IMR-90 (cell line): ENCODE measurements at regions of chrX and their contacts with region 1.

Region 1: GRCh38 chrX:155819966-155820491 is 61.1 kb upstream of the VAMP7 start:
- DNase-seq: peak; percentile 85
- ATAC-seq: peak; percentile 95
- H3K4me3 ChIP-seq: no peak overlapping the region
- H3K27ac ChIP-seq: no peak overlapping the region
- H3K4me1 ChIP-seq: no peaks in the 10 kb centered on the region
- H3K27me3 ChIP-seq: no peaks in the 10 kb centered on the region
- CTCF ChIP-seq: peak; percentile 72
- POLR2A ChIP-seq: no peak
- RAD21 ChIP-seq: peak; percentile 91

Region 2: GRCh38 chrX:154918060-154918483 is 902.0 kb before region 1 on chrX:
- CTCF ChIA-PET with region 1: no interaction called
- POLR2A ChIA-PET with region 1: no interaction called
- dilution Hi-C with region 1: no loop called
- in situ Hi-C with region 1: no loop called
- intact Hi-C with region 1: loop called (anchors 1 kb)
- DNase-seq: peak; percentile 80
- ATAC-seq: peak; percentile 89
- H3K4me3 ChIP-seq: 0 out of 2 replicates have a peak overlapping the region, but pooled peaks have one; percentile 6
- H3K27ac ChIP-seq: no peak overlapping the region
- H3K4me1 ChIP-seq: no peaks in the 10 kb centered on the region
- H3K27me3 ChIP-seq: no peaks in the 10 kb centered on the region
- CTCF ChIP-seq: peak; percentile 66
- POLR2A ChIP-seq: no peak
- RAD21 ChIP-seq: peak; percentile 73

Region 3: GRCh38 chrX:155094468-155095061 is 725.5 kb before region 1 on chrX:
- CTCF ChIA-PET with region 1: no interaction called
- POLR2A ChIA-PET with region 1: no interaction called
- dilution Hi-C with region 1: no loop called
- in situ Hi-C with region 1: loop called (anchors 10 kb)
- intact Hi-C with region 1: no loop called
- DNase-seq: peak; percentile 21
- ATAC-seq: peak; percentile 61; the same call in 1 of the 2 replicates
- H3K4me3 ChIP-seq: no peak overlapping the region
- H3K27ac ChIP-seq: no peak overlapping the region
- H3K4me1 ChIP-seq: no peaks in the 10 kb centered on the region
- H3K27me3 ChIP-seq: no peaks in the 10 kb centered on the region
- CTCF ChIP-seq: peak; percentile 54
- POLR2A ChIP-seq: no peak
- RAD21 ChIP-seq: peak; percentile 43

Region 4: GRCh38 chrX:155216179-155216939 is 603.7 kb before region 1 on chrX and contains the start of gene VBP1:
- CTCF ChIA-PET with region 1: no interaction called
- POLR2A ChIA-PET with region 1: no interaction called
- dilution Hi-C with region 1: no loop called
- in situ Hi-C with region 1: no loop called
- intact Hi-C with region 1: loop called (anchors 2 kb)
- DNase-seq: peak; percentile 96
- ATAC-seq: peak; percentile 97
- H3K4me3 ChIP-seq: peak within 1 kb of the TSS; percentile 92
- H3K27ac ChIP-seq: peak within 1 kb of the TSS; percentile 90
- H3K4me1 ChIP-seq: no peaks in the 10 kb centered on the region
- H3K27me3 ChIP-seq: no peaks in the 10 kb centered on the region
- CTCF ChIP-seq: peak; percentile 41
- POLR2A ChIP-seq: peak; percentile 64; the same call in 1 of the 2 replicates
- RAD21 ChIP-seq: no peak
- total RNA-seq, gene VBP1: 42.3 and 75.3 TPM in 2 replicates